ENCODE measurements at regions of chr1 and their contacts with region 1.

Region 1: DNA sequence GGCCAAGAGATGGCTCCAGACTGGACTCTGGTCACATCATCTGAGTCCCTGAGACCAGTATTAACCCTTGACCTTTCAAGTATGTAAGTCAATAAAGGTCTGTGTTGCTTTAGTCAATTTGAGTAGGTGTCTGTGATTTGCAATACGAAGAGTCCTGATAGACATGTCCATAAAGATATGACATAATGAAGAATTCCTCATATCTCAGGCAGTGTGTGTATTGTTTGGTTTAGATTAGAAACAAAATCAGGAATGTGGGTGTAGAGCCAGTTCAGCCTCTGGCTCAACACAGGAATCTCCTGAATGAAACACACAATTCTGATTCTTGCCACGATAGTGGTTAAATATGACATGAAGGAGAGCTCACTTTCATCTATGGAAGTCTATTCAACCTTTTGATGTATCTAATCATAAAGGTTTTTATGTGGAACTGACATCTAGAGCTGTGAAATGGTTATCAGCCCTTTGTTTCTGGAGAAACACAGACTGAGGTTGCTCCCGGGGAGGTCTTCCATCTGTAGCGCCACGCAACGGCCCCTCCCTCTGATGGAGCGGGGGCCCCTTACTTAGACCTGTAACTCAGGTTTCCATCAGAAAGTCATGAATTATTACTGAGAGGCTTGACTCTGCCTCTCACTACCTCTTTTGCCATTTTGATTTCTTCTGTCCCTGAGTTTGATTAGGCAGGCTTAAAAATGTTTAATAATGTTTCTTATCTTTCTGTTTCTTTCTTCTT is 19.6 kb downstream of the TSPAN2 start:
- DNase-seq: no peak
- H3K4me3 Mint-ChIP-seq: no peak overlapping the region
- H3K27ac Mint-ChIP-seq: no peak overlapping the region
- H3K4me1 Mint-ChIP-seq: peaks cover 41% of the 10 kb centered on the region
- H3K27me3 Mint-ChIP-seq: no peaks in the 10 kb centered on the region

Region 2: GRCh38 chr1:114737314-114737849 is 332.4 kb before region 1 on chr1:
- CTCF ChIA-PET with region 1: no interaction called
- intact Hi-C with region 1: no loop called
- DNase-seq: no peak
- H3K4me3 Mint-ChIP-seq: no peak overlapping the region
- H3K27ac Mint-ChIP-seq: no peak overlapping the region
- H3K4me1 Mint-ChIP-seq: peaks cover 15% of the 10 kb centered on the region
- H3K27me3 Mint-ChIP-seq: no peaks in the 10 kb centered on the region

Region 3: GRCh38 chr1:115029526-115029925 is 40.2 kb before region 1 on chr1 and contains the start of gene TSHB:
- CTCF ChIA-PET with region 1: no interaction called
- intact Hi-C with region 1: no loop called
- DNase-seq: no peak
- H3K4me3 Mint-ChIP-seq: no peak within 1 kb of the TSS
- H3K27ac Mint-ChIP-seq: no peak within 1 kb of the TSS
- H3K4me1 Mint-ChIP-seq: no peaks in the 10 kb centered on the region
- H3K27me3 Mint-ChIP-seq: no peaks in the 10 kb centered on the region
- total RNA-seq, gene TSHB: not detected

Region 4: GRCh38 chr1:115089420-115090185 is 19.9 kb after region 1 on chr1 and contains the start of gene TSPAN2:
- CTCF ChIA-PET with region 1: no interaction called
- intact Hi-C with region 1: loop called (anchors 2 kb)
- DNase-seq: peak; percentile 41
- H3K4me3 Mint-ChIP-seq: peak within 1 kb of the TSS; percentile 70
- H3K27ac Mint-ChIP-seq: no peak within 1 kb of the TSS
- H3K4me1 Mint-ChIP-seq: peaks cover 38% of the 10 kb centered on the region
- H3K27me3 Mint-ChIP-seq: no peaks in the 10 kb centered on the region
- total RNA-seq, gene TSPAN2: 0.86 to 0.91 TPM

Region 5: GRCh38 chr1:115098979-115099692 is 29.4 kb after region 1 on chr1:
- CTCF ChIA-PET with region 1: no interaction called
- intact Hi-C with region 1: loop called (anchors 2 kb)
- DNase-seq: peak; percentile 76
- H3K4me3 Mint-ChIP-seq: peak overlapping the region; percentile 78
- H3K27ac Mint-ChIP-seq: peak overlapping the region; percentile 57
- H3K4me1 Mint-ChIP-seq: peaks cover 30% of the 10 kb centered on the region
- H3K27me3 Mint-ChIP-seq: no peaks in the 10 kb centered on the region

Region 6: GRCh38 chr1:115198938-115199337 is 129.2 kb after region 1 on chr1:
- CTCF ChIA-PET with region 1: no interaction called
- intact Hi-C with region 1: no loop called
- DNase-seq: no peak
- H3K4me3 Mint-ChIP-seq: no peak overlapping the region
- H3K27ac Mint-ChIP-seq: no peak overlapping the region
- H3K4me1 Mint-ChIP-seq: no peaks in the 10 kb centered on the region
- H3K27me3 Mint-ChIP-seq: peaks cover 17% of the 10 kb centered on the region